Stomach (tissue), 19 donors: ENCODE measurements at regions of chr2 and their contacts with region 1.

Region 1: DNA sequence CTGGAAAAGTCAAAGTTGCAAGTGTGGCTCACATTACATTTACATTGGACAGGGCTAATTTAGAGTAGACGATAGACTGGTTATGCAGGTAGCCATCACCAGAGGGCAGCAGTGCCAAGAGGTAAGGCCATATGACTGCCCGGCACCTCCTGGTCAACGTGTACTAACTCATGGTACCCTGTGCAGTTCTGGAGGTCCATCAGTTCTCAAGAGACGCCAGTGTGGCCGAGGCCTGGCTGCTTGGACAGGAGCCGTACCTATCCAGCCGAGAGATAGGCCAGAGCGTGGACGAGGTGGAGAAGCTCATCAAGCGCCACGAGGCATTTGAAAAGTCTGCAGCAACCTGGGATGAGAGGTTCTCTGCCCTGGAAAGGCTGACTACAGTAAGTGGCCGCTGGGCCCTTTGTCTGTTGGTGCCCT is 65.8 kb upstream of the EML6 start:
- DNase-seq: peak; percentile 74 to 82
- H3K4me3 ChIP-seq: no peak overlapping the region
- H3K27ac ChIP-seq: peak overlapping the region in 3 of 5 donors; percentile 15 to 59 (median 32)
- H3K4me1 ChIP-seq: peaks cover 0 to 17% (median 8%) of the 10 kb centered on the region in 4 donors
- H3K27me3 ChIP-seq: no peaks in the 10 kb centered on the region
- CTCF ChIP-seq: peak in 4 of 7 experiments; percentile 47 to 66 (median 58)
- EP300 ChIP-seq: no peak
- POLR2A ChIP-seq: no peak

Region 2: DNA sequence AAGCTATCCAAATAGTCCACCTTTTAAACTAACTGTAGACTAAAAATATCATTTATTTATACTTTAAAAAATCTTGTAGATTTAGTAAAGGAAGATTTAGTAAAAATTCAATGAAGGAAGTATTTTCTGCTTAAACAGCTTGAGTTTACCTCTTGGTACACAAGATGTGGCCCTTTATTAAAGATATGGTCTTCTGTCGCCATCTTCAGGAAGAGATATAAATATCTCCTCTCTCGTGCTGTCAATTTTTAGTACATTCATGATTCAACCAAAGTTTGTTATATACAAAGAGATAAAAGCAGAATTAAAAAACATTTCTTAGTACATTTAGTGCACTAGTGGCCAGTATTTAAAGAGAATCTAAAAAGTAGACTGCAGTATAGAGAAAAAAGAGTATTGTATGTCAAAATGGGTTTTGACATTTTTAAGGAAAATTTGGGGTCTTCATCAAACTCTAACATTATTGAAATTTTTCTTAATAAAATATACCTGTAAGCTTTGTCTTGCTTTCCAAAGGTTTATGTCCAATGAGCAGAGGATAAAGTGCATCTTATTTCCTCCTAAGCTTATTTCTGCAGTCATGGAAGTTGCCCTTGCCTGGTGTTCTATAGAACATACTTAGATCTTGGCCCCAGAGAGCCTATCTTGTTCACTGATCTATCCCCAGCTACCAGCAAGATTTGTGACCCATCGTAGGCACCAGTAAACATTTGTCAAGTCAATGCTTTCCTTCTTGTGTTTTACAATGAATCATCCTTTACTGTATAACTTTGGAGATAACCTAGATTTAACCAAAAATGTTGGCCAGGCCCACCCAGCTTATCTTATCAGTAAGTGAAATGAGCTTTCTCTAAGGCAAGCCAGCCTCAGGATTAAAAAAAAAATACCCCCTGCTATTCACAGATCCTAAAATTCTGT is 47.3 kb after region 1 on chr2:
- intact Hi-C with region 1: loop called (anchors 10 kb)
- DNase-seq: peak in 1 of 2 donors; percentile 84
- H3K4me3 ChIP-seq: no peak overlapping the region
- H3K27ac ChIP-seq: no peak overlapping the region
- H3K4me1 ChIP-seq: peaks cover 5 to 24% (median 20%) of the 10 kb centered on the region in 4 donors
- H3K27me3 ChIP-seq: peaks cover 0 to 13% (median 5%) of the 10 kb centered on the region in 3 donors
- CTCF ChIP-seq: peak in 5 of 7 experiments; percentile 20 to 62 (median 47)
- EP300 ChIP-seq: no peak
- POLR2A ChIP-seq: no peak

Region 3: GRCh38 chr2:54834721-54835120 is 177.0 kb after region 1 on chr2:
- intact Hi-C with region 1: no loop called
- DNase-seq: no peak
- H3K4me3 ChIP-seq: no peak overlapping the region
- H3K27ac ChIP-seq: no peak overlapping the region
- H3K4me1 ChIP-seq: peaks cover 0 to 7% (median 2%) of the 10 kb centered on the region in 4 donors
- H3K27me3 ChIP-seq: no peaks in the 10 kb centered on the region
- CTCF ChIP-seq: no peak
- EP300 ChIP-seq: no peak
- POLR2A ChIP-seq: no peak